ENCODE measurements at regions of chr17 and their contacts with region 1.

Region 1: DNA sequence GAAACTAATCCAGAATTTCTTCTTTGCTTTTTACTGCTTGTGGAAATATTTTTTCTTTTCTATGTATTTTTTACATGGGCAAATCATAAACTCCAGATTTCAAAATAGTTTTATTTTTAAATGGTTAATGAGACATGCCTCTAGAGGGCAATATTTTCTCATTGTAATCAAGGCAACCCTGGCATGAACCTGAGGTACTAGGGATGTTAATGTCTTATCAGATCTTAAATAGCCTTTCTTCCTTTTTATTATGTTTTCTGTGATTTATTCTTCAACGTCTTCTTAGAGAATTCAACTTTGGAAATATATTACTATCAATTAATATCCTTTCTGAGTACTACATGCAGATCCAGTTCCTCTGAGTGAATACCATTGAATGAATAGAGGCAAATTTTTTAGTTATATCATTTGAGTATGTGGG is 324.7 kb downstream of the BCAS3 start:
- DNase-seq: no peak
- ATAC-seq: no peak
- H3K4me3 Mint-ChIP-seq: no peak overlapping the region
- H3K27ac Mint-ChIP-seq: no peak overlapping the region
- H3K4me1 Mint-ChIP-seq: no peaks in the 10 kb centered on the region
- H3K27me3 Mint-ChIP-seq: no peaks in the 10 kb centered on the region

Region 2: DNA sequence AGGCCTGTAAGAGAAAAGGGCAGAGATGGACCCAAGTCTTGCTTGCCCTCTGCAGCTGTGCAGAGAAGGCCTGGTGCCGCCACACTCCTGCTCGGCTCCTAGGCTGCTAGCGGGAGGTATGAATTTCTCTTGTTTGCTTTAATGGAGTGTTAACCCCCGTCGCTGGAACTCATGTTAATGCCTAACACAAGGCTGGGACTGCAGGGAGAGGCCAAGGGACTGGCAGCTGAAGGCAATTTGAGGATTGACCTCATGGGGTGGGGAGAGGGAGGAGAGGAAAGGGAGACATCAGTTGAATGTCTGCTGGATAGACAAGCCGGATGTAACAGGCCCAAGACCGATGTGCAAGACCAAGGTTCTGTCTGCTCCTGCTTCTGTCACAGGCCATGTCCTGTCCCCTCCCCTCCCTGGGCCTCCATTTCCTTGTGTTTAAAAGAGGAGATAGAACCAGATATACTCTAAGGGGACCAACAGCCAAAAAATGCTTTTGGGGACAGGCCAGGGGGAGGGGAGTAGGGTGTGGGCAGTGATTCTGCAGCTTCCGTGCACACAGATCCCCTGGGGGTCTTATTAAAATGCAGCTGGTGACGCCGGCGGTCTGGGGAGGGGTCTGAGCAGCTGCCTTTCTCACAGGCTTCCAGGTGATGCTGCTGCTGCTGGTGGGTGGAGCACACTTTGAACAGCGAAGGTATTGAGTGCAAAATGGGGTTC is 350.6 kb after region 1 on chr17:
- CTCF ChIA-PET with region 1: interaction called, 3 read pairs
- POLR2A ChIA-PET with region 1: no interaction called
- intact Hi-C with region 1: loop called in 1 of 2 experiments (anchors 10 kb)
- DNase-seq: no peak
- ATAC-seq: no peak
- H3K4me3 Mint-ChIP-seq: no peak overlapping the region
- H3K27ac Mint-ChIP-seq: no peak overlapping the region
- H3K4me1 Mint-ChIP-seq: no peaks in the 10 kb centered on the region
- H3K27me3 Mint-ChIP-seq: no peaks in the 10 kb centered on the region

Region 3: DNA sequence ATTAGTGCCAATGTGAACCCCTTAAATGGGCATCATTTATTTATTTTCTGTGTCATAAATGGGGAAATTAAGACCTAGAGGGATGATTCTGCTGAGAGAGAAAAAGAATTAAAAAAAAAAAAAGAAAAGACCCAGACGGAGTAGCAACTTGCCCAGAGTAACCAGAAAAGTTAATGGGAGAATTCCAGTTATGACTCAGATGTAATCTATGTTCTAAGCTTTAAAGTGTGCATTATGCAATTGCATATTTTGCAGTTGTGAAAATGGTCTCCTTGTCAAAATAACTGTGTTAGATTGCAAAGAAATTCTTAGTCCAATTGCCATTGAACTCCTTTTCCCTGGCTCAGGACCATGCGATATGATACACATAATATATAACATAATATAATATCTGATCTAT is 358.8 kb after region 1 on chr17:
- CTCF ChIA-PET with region 1: interaction called, 4 read pairs
- POLR2A ChIA-PET with region 1: no interaction called
- intact Hi-C with region 1: loop called (anchors 1 to 10 kb)
- DNase-seq: no peak
- ATAC-seq: no peak
- H3K4me3 Mint-ChIP-seq: no peak overlapping the region
- H3K27ac Mint-ChIP-seq: no peak overlapping the region
- H3K4me1 Mint-ChIP-seq: no peaks in the 10 kb centered on the region
- H3K27me3 Mint-ChIP-seq: no peaks in the 10 kb centered on the region

Region 4: DNA sequence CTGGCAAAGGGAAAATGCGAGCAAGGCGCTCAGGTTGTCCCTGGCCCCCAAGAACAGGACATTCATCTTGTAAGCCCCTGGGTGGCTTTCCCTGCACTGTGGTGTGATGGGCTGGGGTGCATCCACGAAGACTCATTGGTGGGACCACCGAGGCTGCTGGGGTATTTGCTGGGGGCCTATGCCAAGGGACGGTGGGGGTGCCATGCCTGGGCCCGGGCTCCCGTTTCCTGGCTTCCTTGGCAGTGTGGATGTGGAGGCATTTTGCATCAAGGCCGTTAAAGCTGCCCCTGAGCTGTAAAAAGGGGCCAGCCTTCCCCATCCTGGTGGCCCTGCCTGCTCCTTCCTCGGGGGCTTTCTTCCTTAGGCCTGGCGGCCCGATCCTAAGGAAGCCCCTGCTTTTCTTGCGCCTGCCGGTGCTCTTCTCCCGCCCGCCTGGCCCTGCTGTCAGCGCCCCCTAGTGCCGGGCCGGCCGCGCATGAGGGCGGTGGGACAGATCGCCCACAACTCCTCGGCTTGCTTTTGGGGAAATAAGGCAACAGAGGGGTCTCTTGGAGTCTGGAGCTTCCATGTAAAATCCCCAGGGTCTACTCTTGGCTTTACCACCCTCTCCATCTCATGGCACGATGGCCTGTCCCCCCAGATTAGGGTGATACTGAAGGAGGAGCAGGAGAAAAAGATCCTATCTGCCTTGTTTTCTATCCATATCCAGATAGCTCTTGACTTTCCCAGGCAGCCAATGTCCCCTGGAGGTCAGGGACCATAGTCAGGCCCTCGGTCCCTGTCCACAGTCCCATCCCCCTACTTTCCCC is 387.5 kb after region 1 on chr17:
- CTCF ChIA-PET with region 1: interaction called, 3 read pairs
- POLR2A ChIA-PET with region 1: no interaction called
- intact Hi-C with region 1: loop called (anchors 1 kb)
- DNase-seq: peak; percentile 74
- ATAC-seq: peak; percentile 74
- H3K4me3 Mint-ChIP-seq: no peak overlapping the region
- H3K27ac Mint-ChIP-seq: no peak overlapping the region
- H3K4me1 Mint-ChIP-seq: no peaks in the 10 kb centered on the region
- H3K27me3 Mint-ChIP-seq: peaks cover 7% of the 10 kb centered on the region

Region 5: DNA sequence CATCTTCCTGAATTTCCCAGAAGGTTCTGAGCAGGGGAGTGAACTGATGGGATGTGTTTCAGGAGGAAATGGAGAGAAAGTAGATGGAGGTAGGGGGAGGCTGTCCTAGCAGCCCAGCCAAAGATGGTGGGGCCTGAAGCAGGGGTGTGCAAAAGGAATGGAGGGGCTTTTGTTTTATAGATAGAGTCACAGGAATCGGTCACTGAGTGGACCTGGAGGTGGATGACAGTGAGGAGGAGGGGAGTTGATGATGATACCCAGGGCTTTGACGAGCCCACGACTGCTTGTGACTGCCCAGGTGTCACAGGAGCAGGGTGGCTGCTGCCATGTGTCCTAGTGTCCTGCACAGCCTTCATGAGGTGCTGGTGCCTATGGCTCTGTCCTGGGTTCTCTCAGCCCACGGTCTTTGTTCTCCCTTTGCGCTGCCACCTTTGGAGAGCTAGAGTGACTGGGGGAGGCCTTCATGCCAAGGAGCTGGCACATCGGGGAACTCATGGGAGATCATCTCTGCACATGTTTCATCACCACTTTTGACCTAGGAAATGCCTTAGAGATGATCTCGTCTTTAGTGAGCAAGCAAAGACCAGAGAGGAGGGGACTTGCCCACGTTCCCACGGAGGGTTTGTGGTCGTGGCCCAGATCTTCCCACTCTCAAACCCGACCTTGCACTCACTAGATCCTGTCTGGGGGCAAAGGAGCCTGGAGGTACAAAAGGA is 473.2 kb after region 1 on chr17:
- CTCF ChIA-PET with region 1: no interaction called
- POLR2A ChIA-PET with region 1: no interaction called
- intact Hi-C with region 1: no loop called
- DNase-seq: no peak
- ATAC-seq: no peak
- H3K4me3 Mint-ChIP-seq: no peak overlapping the region
- H3K27ac Mint-ChIP-seq: no peak overlapping the region
- H3K4me1 Mint-ChIP-seq: no peaks in the 10 kb centered on the region
- H3K27me3 Mint-ChIP-seq: peaks cover 6% of the 10 kb centered on the region